ENCODE measurements at regions of chr21 and their contacts with region 1.

Region 1: GRCh38 chr21:38244885-38245545 is 11.8 kb upstream of the KCNJ15 start:
- DNase-seq: peak; percentile 89
- H3K4me3 Mint-ChIP-seq: peak overlapping the region; percentile 10
- H3K27ac Mint-ChIP-seq: peak overlapping the region; percentile 87
- H3K4me1 Mint-ChIP-seq: peaks cover 41% of the 10 kb centered on the region
- H3K27me3 Mint-ChIP-seq: no peaks in the 10 kb centered on the region

Region 2: GRCh38 chr21:38219049-38219628 is 25.9 kb before region 1 on chr21:
- CTCF ChIA-PET with region 1: interaction called, 16 read pairs
- intact Hi-C with region 1: loop called (anchors 2 kb)
- DNase-seq: peak; percentile 78
- H3K4me3 Mint-ChIP-seq: no peak overlapping the region
- H3K27ac Mint-ChIP-seq: no peak overlapping the region
- H3K4me1 Mint-ChIP-seq: peaks cover 3% of the 10 kb centered on the region
- H3K27me3 Mint-ChIP-seq: no peaks in the 10 kb centered on the region

Region 3: GRCh38 chr21:38234395-38235151 is 10.4 kb before region 1 on chr21:
- CTCF ChIA-PET with region 1: no interaction called
- intact Hi-C with region 1: no loop called
- DNase-seq: no peak
- H3K4me3 Mint-ChIP-seq: no peak overlapping the region
- H3K27ac Mint-ChIP-seq: no peak overlapping the region
- H3K4me1 Mint-ChIP-seq: no peaks in the 10 kb centered on the region
- H3K27me3 Mint-ChIP-seq: no peaks in the 10 kb centered on the region

Region 4: DNA sequence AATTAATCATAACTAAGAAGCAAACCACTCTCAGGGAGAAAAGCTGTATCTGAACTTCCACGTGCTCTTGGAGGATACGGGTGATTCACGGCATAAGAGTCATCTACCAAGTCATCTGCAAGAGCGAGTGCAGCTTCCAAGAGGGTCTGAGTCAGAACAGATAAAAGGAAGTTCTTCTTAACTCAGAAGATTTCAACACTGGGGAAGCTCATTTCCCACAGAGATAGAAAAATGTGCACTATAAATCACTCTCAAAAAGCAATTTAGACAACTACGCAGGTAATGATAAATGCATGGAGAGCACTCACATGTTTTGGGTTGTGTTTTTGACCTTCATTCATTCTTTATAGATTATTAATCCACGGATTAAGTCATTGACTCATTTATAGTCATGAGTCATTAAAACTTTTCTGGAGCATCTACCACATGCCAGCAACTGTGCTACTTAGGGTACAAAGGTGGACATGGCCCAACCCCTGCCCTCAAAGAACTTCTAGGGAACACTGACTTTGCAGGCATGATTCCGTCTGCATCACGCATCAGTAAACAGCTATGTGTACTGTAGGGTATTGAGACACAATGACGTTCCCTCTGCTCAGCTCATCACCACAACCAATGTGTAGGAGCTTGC is 32.6 kb after region 1 on chr21:
- CTCF ChIA-PET with region 1: interaction called, 3 read pairs
- intact Hi-C with region 1: loop called (anchors 1 kb)
- DNase-seq: peak; percentile 63
- H3K4me3 Mint-ChIP-seq: no peak overlapping the region
- H3K27ac Mint-ChIP-seq: peak overlapping the region; percentile 13
- H3K4me1 Mint-ChIP-seq: peaks cover 17% of the 10 kb centered on the region
- H3K27me3 Mint-ChIP-seq: no peaks in the 10 kb centered on the region

Region 5: DNA sequence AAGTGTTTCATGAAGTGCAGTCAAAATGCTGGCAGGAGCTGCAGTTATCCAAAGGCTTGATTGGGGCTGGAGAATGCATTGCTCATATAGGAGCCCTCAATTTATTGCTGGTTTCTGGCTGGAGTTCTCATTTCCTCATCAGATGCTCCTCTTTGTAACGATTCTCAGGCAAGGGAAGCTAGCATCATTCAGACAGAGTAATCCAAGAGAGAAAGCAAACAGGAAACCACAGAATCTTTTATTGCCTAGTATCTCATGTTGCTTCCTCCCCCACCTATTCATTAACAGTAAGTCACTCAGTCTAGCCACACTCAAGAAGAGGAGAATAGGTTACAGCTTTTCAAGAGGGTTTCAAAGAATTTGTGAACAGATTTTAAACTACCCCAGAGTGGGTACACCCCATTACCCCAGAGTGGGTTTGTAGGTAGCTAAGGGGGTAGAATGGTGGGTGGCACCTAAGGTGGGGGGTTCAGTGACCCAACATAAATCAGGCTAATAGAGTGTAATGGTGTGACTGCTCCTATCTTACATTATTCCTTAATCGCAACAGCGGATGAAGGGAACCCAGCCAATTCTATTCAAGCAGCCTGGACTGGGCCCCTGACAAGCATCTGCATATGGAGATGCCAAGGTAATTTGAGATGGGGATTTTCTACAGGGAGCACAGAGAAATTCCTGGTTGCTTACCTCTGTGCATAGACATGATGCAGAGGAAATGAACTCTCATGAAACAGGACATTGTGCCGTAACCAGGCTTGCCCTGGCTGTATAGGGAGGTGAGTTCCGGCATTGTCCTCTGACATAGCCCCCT is 78.9 kb after region 1 on chr21:
- CTCF ChIA-PET with region 1: interaction called, 3 read pairs
- intact Hi-C with region 1: loop called (anchors 1 kb)
- DNase-seq: no peak
- H3K4me3 Mint-ChIP-seq: no peak overlapping the region
- H3K27ac Mint-ChIP-seq: peak overlapping the region; percentile 17
- H3K4me1 Mint-ChIP-seq: peaks cover 36% of the 10 kb centered on the region
- H3K27me3 Mint-ChIP-seq: no peaks in the 10 kb centered on the region

Region 6: GRCh38 chr21:39313571-39314142 is 1068.6 kb after region 1 on chr21 and contains the start of gene BRWD1:
- CTCF ChIA-PET with region 1: no interaction called
- intact Hi-C with region 1: loop called (anchors 10 kb)
- DNase-seq: peak; percentile 75
- H3K4me3 Mint-ChIP-seq: peak within 1 kb of the TSS; percentile 93
- H3K27ac Mint-ChIP-seq: peak within 1 kb of the TSS; percentile 97
- H3K4me1 Mint-ChIP-seq: peaks cover 42% of the 10 kb centered on the region
- H3K27me3 Mint-ChIP-seq: no peaks in the 10 kb centered on the region
- total RNA-seq, gene BRWD1: 23.0 to 24.5 TPM

Measured in activated naive CD4-positive, alpha-beta T cell treated with anti-CD3 and anti-CD28 coated beads for 36 hours (primary cell).